Posterior cingulate gyrus (tissue), 11 donors: ENCODE measurements at regions of chr5 and their contacts with region 1.

Region 1: DNA sequence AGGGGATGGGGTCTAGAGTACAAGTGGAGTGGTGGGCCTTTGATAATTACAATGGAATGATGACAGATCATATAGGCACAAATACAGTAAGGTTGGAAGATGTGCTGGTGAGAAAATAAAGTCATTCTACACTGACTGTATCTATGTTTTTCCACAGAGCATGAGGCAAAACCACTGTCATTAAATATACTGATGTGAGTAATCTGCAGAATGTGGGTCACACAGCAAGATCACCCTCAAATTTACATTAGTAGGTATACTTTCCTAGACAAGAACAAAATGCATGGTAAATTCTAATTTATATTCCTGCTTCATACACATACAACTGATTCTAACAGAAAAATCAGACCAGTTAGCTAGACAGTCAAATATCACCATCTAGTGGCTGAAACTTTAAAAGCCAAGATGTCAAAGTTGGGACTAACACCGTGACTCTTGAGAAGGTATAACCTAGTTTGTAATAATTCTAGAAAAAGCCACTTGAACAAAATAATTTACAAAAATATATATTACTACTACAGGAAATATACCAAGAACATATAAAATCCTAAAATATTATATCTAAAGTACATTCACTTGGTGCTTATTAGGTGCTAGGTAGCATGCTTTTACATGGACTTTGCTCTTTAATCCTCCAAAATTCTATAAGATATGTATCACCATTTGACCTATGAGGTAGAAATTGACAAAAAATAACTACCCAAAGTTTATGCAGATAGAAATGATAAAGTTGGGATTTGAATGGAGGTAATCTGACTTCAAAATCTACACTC is 19.5 kb downstream of the TTC33 start:
- DNase-seq: no peak

Region 2: DNA sequence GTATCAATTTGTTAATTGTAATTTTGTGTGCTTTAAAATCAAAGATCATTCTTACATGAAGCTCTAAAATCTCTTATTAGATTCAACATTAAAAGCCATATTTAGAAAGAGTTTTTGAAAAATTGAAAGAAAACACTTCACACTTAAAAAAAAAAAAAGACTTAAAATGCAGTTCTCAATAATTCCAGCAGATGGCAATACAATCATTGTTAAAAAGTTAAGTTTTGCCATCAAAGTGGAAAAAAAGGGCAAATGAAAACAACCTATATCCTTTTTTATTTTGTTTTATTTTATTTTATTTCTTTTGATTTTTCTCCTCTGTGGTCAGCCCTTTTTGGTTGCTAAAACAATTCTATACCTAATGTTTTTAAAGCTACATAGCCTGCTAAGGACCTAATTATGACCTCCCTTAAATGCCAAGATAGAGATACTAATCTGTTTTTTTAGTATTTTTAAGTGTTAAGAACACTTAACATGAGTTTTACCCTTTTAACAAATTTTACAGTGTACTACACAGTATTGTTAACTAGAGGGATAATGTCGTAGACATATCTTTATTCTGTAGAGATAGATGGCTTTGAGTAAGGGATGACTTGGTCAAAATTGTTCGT is 1157.3 kb before region 1 on chr5:
- intact Hi-C with region 1: loop called (anchors 5 kb)
- DNase-seq: no peak

Region 3: GRCh38 chr5:39948867-39949468 is 787.3 kb before region 1 on chr5:
- intact Hi-C with region 1: loop called (anchors 5 kb)
- DNase-seq: peak in 3 of 10 donors; percentile 8 to 34 (median 16)